Calu3 (cell line): ENCODE measurements at regions of chr1 and their contacts with region 1.

Region 1: GRCh38 chr1:26677306-26678115 is 18.3 kb upstream of the ARID1A start:
- DNase-seq: peak; percentile 84
- H3K4me3 Mint-ChIP-seq: peak overlapping the region; percentile 20
- H3K27ac Mint-ChIP-seq: no peak overlapping the region
- H3K4me1 Mint-ChIP-seq: peaks cover 11% of the 10 kb centered on the region
- H3K27me3 Mint-ChIP-seq: no peaks in the 10 kb centered on the region
- CTCF ChIP-seq: peak; percentile 58

Region 2: DNA sequence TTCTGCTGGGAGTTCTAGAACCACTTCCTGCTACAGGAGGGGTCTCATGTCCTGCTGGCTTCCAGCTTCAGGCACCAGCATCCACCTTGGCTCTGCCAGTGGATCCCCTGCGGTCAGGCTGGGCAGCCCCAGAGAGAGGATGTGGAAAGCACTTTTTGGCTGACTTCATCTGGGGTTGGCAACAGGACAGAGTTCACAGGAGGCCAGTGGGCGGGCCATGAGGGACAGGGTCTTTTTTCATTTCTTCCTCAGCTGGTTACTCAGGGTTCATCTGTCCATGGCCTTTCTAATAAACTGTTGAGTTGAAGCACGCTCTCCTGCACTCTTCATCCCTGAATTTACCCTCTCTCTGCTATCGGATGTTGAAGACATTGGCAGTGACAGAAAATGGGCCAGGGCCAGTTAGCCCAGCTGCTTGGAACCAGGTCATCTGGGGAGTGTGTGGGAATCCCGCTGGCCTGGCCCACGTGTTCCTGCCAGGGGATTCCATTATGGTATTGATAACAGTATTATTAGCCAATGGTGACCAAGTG is 102.7 kb before region 1 on chr1:
- CTCF ChIA-PET with region 1: no interaction called
- intact Hi-C with region 1: no loop called
- DNase-seq: no peak
- H3K4me3 Mint-ChIP-seq: no peak overlapping the region
- H3K27ac Mint-ChIP-seq: no peak overlapping the region
- H3K4me1 Mint-ChIP-seq: no peaks in the 10 kb centered on the region
- H3K27me3 Mint-ChIP-seq: no peaks in the 10 kb centered on the region
- CTCF ChIP-seq: no peak

Region 3: GRCh38 chr1:26602378-26602959 is 75.0 kb before region 1 on chr1:
- CTCF ChIA-PET with region 1: interaction called, 17 read pairs
- intact Hi-C with region 1: loop called (anchors 2 kb)
- DNase-seq: peak; percentile 45
- H3K4me3 Mint-ChIP-seq: no peak overlapping the region
- H3K27ac Mint-ChIP-seq: no peak overlapping the region
- H3K4me1 Mint-ChIP-seq: no peaks in the 10 kb centered on the region
- H3K27me3 Mint-ChIP-seq: no peaks in the 10 kb centered on the region
- CTCF ChIP-seq: peak; percentile 47

Region 4: DNA sequence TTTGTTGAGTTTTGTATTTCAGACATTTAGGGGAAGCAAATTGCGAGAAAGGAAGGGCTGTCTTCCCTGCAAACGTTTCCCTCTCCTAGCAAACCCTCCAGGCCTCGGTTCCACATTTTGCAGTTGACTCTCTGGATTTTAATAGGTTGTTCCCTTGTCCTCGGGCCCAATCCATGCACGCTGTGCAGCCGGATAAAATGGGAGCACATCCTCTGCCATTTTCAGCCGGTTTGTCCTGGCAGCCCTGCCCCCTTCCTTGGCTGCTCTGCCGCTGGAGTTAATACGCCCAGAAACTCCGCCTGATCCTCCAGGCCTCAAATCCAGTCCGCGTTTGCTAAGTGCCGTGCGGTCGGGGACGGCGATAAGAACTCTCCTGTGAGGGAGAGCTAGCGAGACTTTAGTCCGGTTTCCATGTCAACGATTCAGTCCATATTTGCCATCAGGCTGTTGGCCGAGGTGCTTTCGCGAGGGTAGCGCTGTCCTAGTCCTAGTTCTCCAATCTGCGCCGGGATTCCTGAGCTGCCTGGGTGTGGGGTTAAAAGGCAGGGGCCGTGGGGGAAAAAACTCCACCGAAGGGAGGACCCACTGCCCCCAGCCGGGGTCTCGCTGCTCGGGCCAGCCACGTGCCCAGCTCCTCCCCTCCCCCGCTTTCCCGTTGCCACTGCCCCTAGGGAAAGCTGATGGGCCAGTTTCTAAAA is 15.4 kb after region 1 on chr1:
- CTCF ChIA-PET with region 1: interaction called, 22 read pairs
- intact Hi-C with region 1: no loop called
- DNase-seq: peak; percentile 88
- H3K4me3 Mint-ChIP-seq: peak overlapping the region; percentile 79
- H3K27ac Mint-ChIP-seq: peak overlapping the region; percentile 89
- H3K4me1 Mint-ChIP-seq: peaks cover 22% of the 10 kb centered on the region
- H3K27me3 Mint-ChIP-seq: no peaks in the 10 kb centered on the region
- CTCF ChIP-seq: no peak